Breast epithelium (tissue), 4 donors: ENCODE measurements at regions of chr16 and their contacts with region 1.

Region 1: GRCh38 chr16:60739737-60740683 is 1296.2 kb downstream of the CDH8 start:
- DNase-seq: no peak
- H3K4me3 ChIP-seq: peak overlapping the region in 2 of 3 donors; percentile 7 to 43
- H3K27ac ChIP-seq: peak overlapping the region; percentile 5 to 19
- H3K4me1 ChIP-seq: no peaks in the 10 kb centered on the region
- H3K27me3 ChIP-seq: no peaks in the 10 kb centered on the region
- CTCF ChIP-seq: no peak
- POLR2A ChIP-seq: no peak

Region 2: GRCh38 chr16:60882801-60883200 is 142.8 kb after region 1 on chr16:
- intact Hi-C with region 1: no loop called
- DNase-seq: no peak
- H3K4me3 ChIP-seq: no peak overlapping the region
- H3K27ac ChIP-seq: no peak overlapping the region
- H3K4me1 ChIP-seq: no peaks in the 10 kb centered on the region
- H3K27me3 ChIP-seq: no peaks in the 10 kb centered on the region
- CTCF ChIP-seq: no peak
- POLR2A ChIP-seq: no peak

Region 3: GRCh38 chr16:60922920-60923319 is 182.9 kb after region 1 on chr16:
- intact Hi-C with region 1: loop called (anchors 5 kb)
- DNase-seq: no peak
- H3K4me3 ChIP-seq: no peak overlapping the region
- H3K27ac ChIP-seq: no peak overlapping the region
- H3K4me1 ChIP-seq: no peaks in the 10 kb centered on the region
- H3K27me3 ChIP-seq: no peaks in the 10 kb centered on the region
- CTCF ChIP-seq: no peak
- POLR2A ChIP-seq: no peak